ENCODE measurements at regions of chr3 and their contacts with region 1.

Region 1: DNA sequence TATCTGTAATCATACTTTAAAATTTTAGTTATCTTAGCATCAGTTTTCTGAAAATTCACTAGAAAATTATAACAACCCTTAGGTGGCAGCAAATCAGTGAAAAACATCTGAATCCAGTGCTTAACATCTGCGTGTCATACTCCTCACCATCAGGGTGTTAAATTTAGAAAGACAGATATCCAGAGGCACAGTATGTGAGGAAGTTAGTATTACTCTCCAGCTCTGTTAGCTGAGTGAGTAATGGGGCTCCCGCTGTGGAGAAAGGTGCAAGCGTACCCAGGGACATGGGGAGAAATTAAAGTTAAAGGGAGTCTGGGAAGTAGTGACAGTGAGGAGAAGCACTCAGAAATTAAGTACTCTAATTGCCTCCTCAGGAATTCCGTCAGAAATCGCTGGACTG is 50.9 kb downstream of the CEP63 start:
- DNase-seq: no peak
- ATAC-seq: no peak
- H3K4me3 ChIP-seq: no peak overlapping the region
- H3K27ac ChIP-seq: no peak overlapping the region
- H3K4me1 ChIP-seq: no peaks in the 10 kb centered on the region
- H3K27me3 ChIP-seq: no peaks in the 10 kb centered on the region
- CTCF ChIP-seq: no peak; the same call in 1 of the 2 replicates

Region 2: GRCh38 chr3:134516905-134517304 is 19.9 kb before region 1 on chr3:
- CTCF ChIA-PET with region 1: no interaction called
- POLR2A ChIA-PET with region 1: interaction called, 16 read pairs
- in situ Hi-C with region 1: no loop called
- intact Hi-C with region 1: no loop called
- DNase-seq: no peak
- ATAC-seq: no peak
- H3K4me3 ChIP-seq: no peak overlapping the region
- H3K27ac ChIP-seq: no peak overlapping the region
- H3K4me1 ChIP-seq: no peaks in the 10 kb centered on the region
- H3K27me3 ChIP-seq: no peaks in the 10 kb centered on the region
- CTCF ChIP-seq: no peak

Measured in Panc1 (cell line).